CD8-positive, alpha-beta T cell (primary cell): ENCODE measurements at regions of chr7 and their contacts with region 1.

Region 1: GRCh38 chr7:129091484-129092002 is 36.6 kb upstream of the TNPO3 start:
- DNase-seq: peak; percentile 73 to 92 (median 83)
- ATAC-seq: peak; percentile 89
- H3K4me3 ChIP-seq: no peak overlapping the region
- H3K4me3 Mint-ChIP-seq: no peak overlapping the region
- H3K27ac ChIP-seq: no peak overlapping the region
- H3K27ac Mint-ChIP-seq: peak overlapping the region; percentile 32
- H3K4me1 ChIP-seq: peaks cover 11% of the 10 kb centered on the region
- H3K4me1 Mint-ChIP-seq: peaks cover 16% of the 10 kb centered on the region
- H3K27me3 ChIP-seq: no peaks in the 10 kb centered on the region
- H3K27me3 Mint-ChIP-seq: no peaks in the 10 kb centered on the region
- CTCF ChIP-seq: peak; percentile 99

Region 2: DNA sequence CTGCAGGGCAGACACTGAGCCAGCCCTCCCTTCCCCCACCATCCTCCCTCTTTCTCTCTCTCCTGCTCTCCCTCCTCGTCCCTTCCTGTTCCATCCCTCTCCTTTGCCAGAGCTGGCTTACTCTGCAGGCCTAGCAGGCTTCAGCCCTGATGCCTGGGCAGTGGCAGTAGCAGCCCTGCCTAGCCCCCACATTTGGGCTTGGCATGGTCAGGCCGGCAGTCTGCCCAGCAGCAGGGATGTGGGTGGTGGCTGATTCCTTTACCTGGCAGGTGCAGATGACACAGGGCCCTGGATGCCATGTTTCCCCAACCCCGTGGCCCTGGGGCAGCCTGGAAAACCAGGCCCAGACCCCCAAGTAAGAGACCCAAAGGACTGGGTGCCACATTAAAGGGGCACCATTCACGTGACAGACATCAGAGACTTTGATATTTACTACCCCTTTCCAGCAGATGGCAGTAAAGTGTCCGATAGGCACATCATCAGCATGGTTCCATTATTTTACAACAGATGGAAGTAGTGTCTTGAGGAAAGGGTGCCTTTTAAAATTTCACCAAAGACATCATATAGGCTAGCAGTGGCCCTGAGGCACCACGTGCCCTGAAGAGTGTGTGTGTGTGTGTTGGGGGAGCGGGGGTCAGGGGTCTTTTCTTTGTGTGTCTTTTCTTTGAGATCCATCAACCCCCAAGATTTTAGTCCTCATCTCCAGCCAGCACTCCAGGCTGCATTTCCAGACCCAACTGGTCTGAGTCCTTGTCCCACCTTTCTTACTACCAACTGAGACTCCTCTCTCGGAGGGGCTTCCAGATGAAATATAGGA is 187.0 kb before region 1 on chr7:
- CTCF ChIA-PET with region 1: interaction called, 17 read pairs
- POLR2A ChIA-PET with region 1: no interaction called
- intact Hi-C with region 1: loop called in 1 of 2 experiments (anchors 1 kb)
- DNase-seq: peak in 3 of 9 experiments; percentile 21 to 79 (median 70)
- ATAC-seq: peak; percentile 81
- H3K4me3 ChIP-seq: no peak overlapping the region
- H3K4me3 Mint-ChIP-seq: no peak overlapping the region
- H3K27ac ChIP-seq: no peak overlapping the region
- H3K27ac Mint-ChIP-seq: no peak overlapping the region
- H3K4me1 ChIP-seq: no peaks in the 10 kb centered on the region
- H3K4me1 Mint-ChIP-seq: no peaks in the 10 kb centered on the region
- H3K27me3 ChIP-seq: peaks cover under 1 to 1% of the 10 kb centered on the region in 2 experiments
- H3K27me3 Mint-ChIP-seq: peaks cover 38% of the 10 kb centered on the region
- CTCF ChIP-seq: peak; percentile 60

Region 3: DNA sequence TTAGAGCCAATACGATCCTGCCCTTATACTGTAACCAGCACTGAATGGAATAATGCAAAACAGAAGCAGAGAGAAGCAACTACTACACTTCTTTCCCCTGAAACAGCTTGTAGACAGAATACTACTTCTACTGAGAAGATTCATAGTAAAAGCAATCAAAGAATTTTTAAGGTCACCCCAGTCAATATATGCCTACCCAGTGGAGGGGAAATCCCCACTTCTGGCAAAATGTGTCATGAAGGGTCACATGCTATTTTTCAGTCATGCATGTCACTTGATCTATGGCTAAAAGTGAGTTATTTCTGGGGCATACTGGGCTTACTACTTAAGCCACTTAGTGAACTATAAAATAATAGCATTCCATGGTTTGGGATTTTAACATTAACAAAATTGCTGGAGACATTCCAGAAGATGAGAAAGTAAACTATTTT is 128.2 kb before region 1 on chr7:
- CTCF ChIA-PET with region 1: interaction called, 11 read pairs
- POLR2A ChIA-PET with region 1: no interaction called
- intact Hi-C with region 1: loop called in 1 of 2 experiments (anchors 10 kb)
- DNase-seq: peak in 2 of 9 experiments; percentile 17 to 38
- ATAC-seq: peak; percentile 34
- H3K4me3 ChIP-seq: no peak overlapping the region
- H3K4me3 Mint-ChIP-seq: no peak overlapping the region
- H3K27ac ChIP-seq: no peak overlapping the region
- H3K27ac Mint-ChIP-seq: peak overlapping the region; percentile 10
- H3K4me1 ChIP-seq: no peaks in the 10 kb centered on the region
- H3K4me1 Mint-ChIP-seq: no peaks in the 10 kb centered on the region
- H3K27me3 ChIP-seq: no peaks in the 10 kb centered on the region
- H3K27me3 Mint-ChIP-seq: no peaks in the 10 kb centered on the region
- CTCF ChIP-seq: no peak

Region 4: DNA sequence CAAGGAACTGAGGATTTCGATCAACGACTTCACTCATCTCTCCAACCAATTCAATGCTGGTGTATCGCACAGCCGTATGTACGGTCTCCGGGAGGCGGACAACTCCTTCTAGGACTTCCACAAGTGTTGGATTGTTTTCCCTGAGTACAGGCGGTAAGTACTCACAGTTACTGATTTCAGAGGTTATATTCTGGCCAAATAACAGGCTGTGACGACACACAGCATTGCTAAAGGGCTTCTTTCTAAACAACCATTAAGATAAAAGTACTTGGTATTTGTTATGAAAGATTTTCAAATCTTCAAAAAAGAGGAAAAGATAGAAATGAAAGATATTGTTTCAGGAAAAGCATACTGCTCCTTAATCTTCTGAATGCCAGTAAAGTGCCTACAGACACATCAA is 101.6 kb before region 1 on chr7:
- CTCF ChIA-PET with region 1: interaction called, 11 read pairs
- POLR2A ChIA-PET with region 1: no interaction called
- intact Hi-C with region 1: loop called in 1 of 2 experiments (anchors 5 kb)
- DNase-seq: no peak
- ATAC-seq: no peak
- H3K4me3 ChIP-seq: no peak overlapping the region
- H3K4me3 Mint-ChIP-seq: no peak overlapping the region
- H3K27ac ChIP-seq: no peak overlapping the region
- H3K27ac Mint-ChIP-seq: no peak overlapping the region
- H3K4me1 ChIP-seq: no peaks in the 10 kb centered on the region
- H3K4me1 Mint-ChIP-seq: no peaks in the 10 kb centered on the region
- H3K27me3 ChIP-seq: no peaks in the 10 kb centered on the region
- H3K27me3 Mint-ChIP-seq: no peaks in the 10 kb centered on the region
- CTCF ChIP-seq: no peak

Region 5: GRCh38 chr7:129054438-129055293 is 36.9 kb before region 1 on chr7 and contains the start of gene TNPO3:
- CTCF ChIA-PET with region 1: interaction called, 7 read pairs
- POLR2A ChIA-PET with region 1: no interaction called
- intact Hi-C with region 1: loop called (anchors 1 to 2 kb)
- DNase-seq: peak; percentile 77 to 94 (median 90)
- ATAC-seq: peak; percentile 86
- H3K4me3 ChIP-seq: peak within 1 kb of the TSS; percentile 80 to 89
- H3K4me3 Mint-ChIP-seq: peak within 1 kb of the TSS; percentile 96
- H3K27ac ChIP-seq: peak within 1 kb of the TSS; percentile 84 to 93
- H3K27ac Mint-ChIP-seq: peak within 1 kb of the TSS; percentile 98
- H3K4me1 ChIP-seq: peaks cover 29% of the 10 kb centered on the region
- H3K4me1 Mint-ChIP-seq: peaks cover 38% of the 10 kb centered on the region
- H3K27me3 ChIP-seq: no peaks in the 10 kb centered on the region
- H3K27me3 Mint-ChIP-seq: peaks cover 3% of the 10 kb centered on the region
- CTCF ChIP-seq: no peak
- total RNA-seq, gene TNPO3: 17.0 to 17.2 TPM

Region 6: DNA sequence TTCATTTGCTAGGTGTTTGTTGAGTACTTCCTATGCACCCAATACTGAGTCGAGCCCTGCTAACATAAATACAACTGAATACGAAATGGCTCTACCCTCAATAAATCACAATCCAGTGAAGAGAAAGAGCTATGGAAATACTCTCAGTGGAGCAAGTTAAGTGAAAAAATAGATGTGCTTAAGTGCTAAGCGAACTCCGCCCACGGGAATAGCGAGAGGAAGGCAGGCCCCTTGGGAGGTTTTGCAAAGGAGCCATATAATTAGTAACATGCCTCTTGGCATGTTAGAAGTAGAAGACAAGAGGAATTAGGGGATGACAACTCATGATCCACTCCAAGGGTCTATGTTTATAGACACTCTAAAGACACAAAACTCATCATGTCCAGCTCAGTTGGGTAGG is 10.2 kb after region 1 on chr7:
- CTCF ChIA-PET with region 1: interaction called, 31 read pairs
- POLR2A ChIA-PET with region 1: no interaction called
- intact Hi-C with region 1: no loop called
- DNase-seq: no peak
- ATAC-seq: no peak
- H3K4me3 ChIP-seq: no peak overlapping the region
- H3K4me3 Mint-ChIP-seq: no peak overlapping the region
- H3K27ac ChIP-seq: no peak overlapping the region
- H3K27ac Mint-ChIP-seq: no peak overlapping the region
- H3K4me1 ChIP-seq: no peaks in the 10 kb centered on the region
- H3K4me1 Mint-ChIP-seq: no peaks in the 10 kb centered on the region
- H3K27me3 ChIP-seq: no peaks in the 10 kb centered on the region
- H3K27me3 Mint-ChIP-seq: no peaks in the 10 kb centered on the region
- CTCF ChIP-seq: no peak

Region 7: DNA sequence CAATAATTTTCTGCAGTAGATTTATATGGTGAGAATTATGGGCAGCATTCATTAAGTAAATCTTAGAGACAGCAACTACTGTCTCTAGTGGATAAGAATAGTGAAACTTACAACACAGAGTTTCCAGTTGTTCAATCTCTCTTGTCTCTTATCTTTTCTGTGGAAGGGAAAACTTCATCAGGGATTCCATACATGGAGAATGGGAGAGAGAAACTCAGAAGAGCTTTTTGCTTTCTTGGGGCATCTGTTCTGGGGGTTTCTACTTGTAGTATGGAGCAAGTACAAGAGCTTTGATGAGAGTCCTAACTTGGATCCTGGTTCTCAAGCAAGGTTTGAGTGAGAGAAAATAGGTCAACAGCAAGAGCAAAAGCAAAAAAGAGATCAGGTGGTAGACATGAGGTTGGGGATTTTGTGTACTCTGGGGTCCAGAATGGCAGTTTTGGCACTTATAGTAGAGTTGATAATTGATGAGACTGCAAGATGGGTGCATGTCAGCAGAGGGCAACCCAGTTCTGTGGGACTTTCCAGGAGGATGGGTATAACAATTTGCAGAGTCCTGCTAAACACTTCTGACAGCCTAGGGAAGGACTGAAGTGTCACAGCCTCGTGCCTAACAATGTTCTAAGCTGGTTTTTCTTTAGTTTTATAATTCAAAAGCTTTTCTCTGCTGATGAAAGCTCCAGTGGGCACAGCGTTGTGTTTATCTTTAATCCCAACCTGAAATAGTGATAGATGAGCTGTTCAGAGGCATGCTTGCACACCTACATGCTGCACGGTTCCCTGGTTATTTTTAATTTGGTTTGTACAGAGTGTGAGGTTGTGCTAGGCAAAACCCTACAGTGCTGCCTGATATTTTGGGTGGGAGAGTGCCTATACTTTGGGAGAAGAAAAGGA is 310.7 kb after region 1 on chr7:
- CTCF ChIA-PET with region 1: no interaction called
- POLR2A ChIA-PET with region 1: no interaction called
- intact Hi-C with region 1: no loop called
- DNase-seq: peak in 3 of 9 experiments; percentile 10 to 33 (median 24)
- ATAC-seq: no peak
- H3K4me3 ChIP-seq: no peak overlapping the region
- H3K4me3 Mint-ChIP-seq: no peak overlapping the region
- H3K27ac ChIP-seq: no peak overlapping the region
- H3K27ac Mint-ChIP-seq: no peak overlapping the region
- H3K4me1 ChIP-seq: no peaks in the 10 kb centered on the region
- H3K4me1 Mint-ChIP-seq: no peaks in the 10 kb centered on the region
- H3K27me3 ChIP-seq: no peaks in the 10 kb centered on the region
- H3K27me3 Mint-ChIP-seq: no peaks in the 10 kb centered on the region
- CTCF ChIP-seq: no peak